PC-3 (cell line): ENCODE measurements at regions of chr3 and their contacts with region 1.

Region 1: DNA sequence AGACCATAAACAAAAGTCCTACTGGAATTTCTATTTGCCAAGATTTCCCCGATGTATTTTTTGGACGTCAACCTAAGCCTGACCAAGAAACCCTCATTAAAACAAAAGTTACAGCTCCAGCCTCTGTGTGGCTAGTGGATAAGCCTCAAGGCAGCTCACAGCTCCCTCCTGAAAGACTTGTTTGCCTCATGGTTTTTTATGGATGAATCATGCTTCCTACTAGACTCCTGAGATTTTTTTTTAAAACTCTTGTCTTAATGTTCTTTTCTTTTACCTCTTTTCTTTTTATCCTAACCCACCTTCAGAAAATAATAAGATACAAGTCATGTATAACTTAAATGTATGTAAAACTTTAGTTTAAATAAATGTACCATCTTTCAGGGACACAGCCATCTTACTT is 52.4 kb downstream of the SUCNR1 start:
- DNase-seq: peak; percentile 89
- ATAC-seq: peak; percentile 89
- H3K4me3 ChIP-seq: peak overlapping the region; percentile 57; the same call in 1 of the 2 replicates
- H3K27ac ChIP-seq: peak overlapping the region; percentile 92
- H3K4me1 ChIP-seq: peaks cover 47% of the 10 kb centered on the region
- H3K27me3 ChIP-seq: no peaks in the 10 kb centered on the region
- CTCF ChIP-seq: no peak

Region 2: GRCh38 chr3:151976211-151977050 is 50.6 kb after region 1 on chr3:
- CTCF ChIA-PET with region 1: interaction called, 9 read pairs
- POLR2A ChIA-PET with region 1: no interaction called
- intact Hi-C with region 1: loop called (anchors 1 kb)
- DNase-seq: peak; percentile 98
- ATAC-seq: peak; percentile 94
- H3K4me3 ChIP-seq: peak overlapping the region; percentile 30; the same call in 1 of the 2 replicates
- H3K27ac ChIP-seq: peak overlapping the region; percentile 88
- H3K4me1 ChIP-seq: peaks cover 58% of the 10 kb centered on the region
- H3K27me3 ChIP-seq: no peaks in the 10 kb centered on the region
- CTCF ChIP-seq: no peak; the same call in 1 of the 2 replicates